ENCODE measurements at regions of chr1 and their contacts with region 1.

Region 1: DNA sequence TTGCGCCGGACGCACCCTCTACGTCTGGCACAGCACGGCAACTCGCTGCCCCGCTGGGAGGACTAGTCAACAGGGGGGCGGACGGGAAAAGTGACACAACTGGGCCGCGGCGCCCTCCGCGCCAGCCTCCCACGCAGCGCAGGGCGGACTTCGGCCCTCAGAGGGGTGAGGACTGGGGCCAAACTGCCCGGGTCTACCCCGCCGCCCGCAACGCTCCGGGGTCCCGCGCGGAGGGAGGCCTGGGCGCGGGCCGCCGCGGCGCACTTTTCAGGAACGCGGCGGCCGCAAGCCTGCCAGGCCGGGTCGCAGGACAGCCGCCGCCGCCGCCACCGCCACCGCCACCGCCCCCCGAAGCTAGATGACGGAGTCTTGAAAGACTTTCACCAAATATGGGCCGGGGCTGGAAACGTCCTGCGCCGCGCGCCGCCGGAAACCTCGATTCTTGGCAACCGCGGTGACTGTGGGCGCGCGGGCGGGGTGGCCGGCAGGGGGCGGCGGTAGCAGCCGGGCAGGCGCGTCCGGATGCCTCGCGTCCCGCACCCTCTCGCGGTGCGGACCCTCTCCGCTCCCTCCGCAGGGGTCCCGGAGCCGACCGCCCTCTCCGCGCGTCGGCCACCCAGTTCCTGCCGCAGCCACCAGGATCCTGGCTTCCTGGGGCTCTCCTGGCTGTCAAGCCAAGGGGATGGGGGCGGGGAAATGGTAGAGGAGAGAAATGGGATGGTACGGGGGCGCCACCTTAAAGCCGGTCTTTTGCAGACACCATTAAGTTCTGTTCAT is 3.7 kb upstream of the CCN1 start:
- DNase-seq: peak; percentile 37
- ATAC-seq: peak; percentile 66
- H3K4me3 ChIP-seq: peak overlapping the region; percentile 63 to 90 (median 78)
- H3K27ac ChIP-seq: no peak overlapping the region
- H3K4me1 ChIP-seq: peaks cover 55% of the 10 kb centered on the region
- H3K27me3 ChIP-seq: peaks cover 0 to 25% of the 10 kb centered on the region in 2 experiments; a peak in 4 of 5 replicates
- CTCF ChIP-seq: peak; percentile 69
- EP300 ChIP-seq: no peak
- POLR2A ChIP-seq: 0 out of 4 replicates have a peak, but pooled peaks of 1 of the 2 experiments have one; percentile 15
- RAD21 ChIP-seq: peak; percentile 68

Region 2: GRCh38 chr1:85464497-85465098 is 112.2 kb before region 1 on chr1:
- CTCF ChIA-PET with region 1: no interaction called
- POLR2A ChIA-PET with region 1: interaction called, 3 read pairs
- in situ Hi-C with region 1: no loop called
- intact Hi-C with region 1: loop called (anchors 2 kb)
- DNase-seq: peak; percentile 40
- ATAC-seq: peak; percentile 74
- H3K4me3 ChIP-seq: peak overlapping the region; percentile 89 to 93 (median 93)
- H3K27ac ChIP-seq: peak overlapping the region; percentile 83
- H3K4me1 ChIP-seq: peaks cover 49% of the 10 kb centered on the region
- H3K27me3 ChIP-seq: no peaks in the 10 kb centered on the region; a peak in 2 of 5 replicates
- CTCF ChIP-seq: no peak
- EP300 ChIP-seq: no peak
- POLR2A ChIP-seq: peak; percentile 61 to 78; a peak in 3 of 4 replicates
- RAD21 ChIP-seq: no peak

Region 3: DNA sequence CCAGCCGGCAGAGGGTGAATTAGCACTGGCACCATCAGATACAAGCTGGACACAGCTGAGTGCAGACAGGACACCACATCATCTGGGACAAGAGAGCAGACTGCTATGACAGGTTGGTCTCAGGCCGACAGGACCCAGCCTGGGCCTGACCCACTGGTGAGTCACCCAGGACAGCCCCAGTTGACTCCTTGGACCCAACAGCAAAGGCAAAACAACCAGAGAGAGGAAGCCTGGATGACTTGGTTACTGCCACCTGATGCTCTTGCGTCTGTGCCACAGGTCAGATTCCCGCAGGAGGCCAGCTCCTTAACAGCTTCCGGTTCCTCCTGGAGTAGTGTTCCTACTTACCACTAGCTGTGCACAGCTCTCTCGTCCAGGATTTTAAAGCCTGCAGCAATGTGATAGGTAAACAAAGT is 22.3 kb after region 1 on chr1:
- CTCF ChIA-PET with region 1: no interaction called
- POLR2A ChIA-PET with region 1: no interaction called
- in situ Hi-C with region 1: no loop called
- intact Hi-C with region 1: no loop called
- DNase-seq: no peak
- ATAC-seq: peak; percentile 59
- H3K4me3 ChIP-seq: no peak overlapping the region
- H3K27ac ChIP-seq: no peak overlapping the region
- H3K4me1 ChIP-seq: peaks cover 14% of the 10 kb centered on the region
- H3K27me3 ChIP-seq: no peaks in the 10 kb centered on the region
- CTCF ChIP-seq: no peak
- EP300 ChIP-seq: no peak
- POLR2A ChIP-seq: no peak
- RAD21 ChIP-seq: no peak

Region 4: DNA sequence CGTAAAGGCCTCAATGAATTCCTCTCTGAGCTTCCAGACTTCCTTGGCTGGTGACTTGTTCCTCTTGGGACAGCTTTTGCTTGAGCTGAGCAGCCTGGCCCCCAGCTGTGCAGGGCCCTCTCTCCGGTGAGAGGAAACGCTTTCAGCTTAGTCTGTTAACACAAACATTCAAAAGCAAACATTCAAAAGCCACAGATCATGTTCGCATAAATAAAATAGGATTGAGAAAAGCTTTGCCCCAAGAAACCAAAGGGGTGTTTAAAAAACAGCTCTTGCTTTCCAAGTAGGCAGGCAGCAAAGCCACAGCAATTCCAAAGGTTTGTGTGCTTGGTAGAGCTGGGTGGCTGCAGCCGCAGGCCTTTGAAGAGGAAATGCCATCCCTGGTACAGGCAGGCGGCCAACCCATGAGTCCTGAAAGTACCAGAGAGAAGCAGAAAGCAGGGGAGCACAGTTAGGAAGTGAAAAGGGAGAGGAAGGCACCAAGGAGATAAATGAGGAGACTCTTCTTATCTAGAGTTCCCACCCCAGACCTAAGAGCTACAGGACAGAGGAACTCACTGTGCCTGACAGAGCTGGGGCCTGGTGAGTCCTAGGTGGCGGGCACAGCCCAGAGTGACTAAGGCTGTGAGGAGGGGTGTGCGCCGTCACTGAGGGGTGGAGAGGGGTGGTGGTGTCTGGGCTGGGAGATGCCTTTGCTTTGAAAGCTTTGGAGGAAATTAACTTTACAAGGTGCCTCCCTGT is 52.1 kb after region 1 on chr1:
- CTCF ChIA-PET with region 1: no interaction called
- POLR2A ChIA-PET with region 1: interaction called, 29 read pairs
- in situ Hi-C with region 1: no loop called
- intact Hi-C with region 1: loop called (anchors 1 kb)
- DNase-seq: peak; percentile 82
- ATAC-seq: peak; percentile 96
- H3K4me3 ChIP-seq: peak overlapping the region; percentile 48 to 62 (median 56)
- H3K27ac ChIP-seq: peak overlapping the region; percentile 91
- H3K4me1 ChIP-seq: peaks cover 41% of the 10 kb centered on the region
- H3K27me3 ChIP-seq: no peaks in the 10 kb centered on the region
- CTCF ChIP-seq: no peak
- EP300 ChIP-seq: 0 out of 4 replicates have a peak, but pooled peaks of 1 of the 2 experiments have one; percentile 10
- POLR2A ChIP-seq: peak; percentile 15 to 50; a peak in 2 of 4 replicates
- RAD21 ChIP-seq: no peak

Region 5: GRCh38 chr1:85681087-85681486 is 104.3 kb after region 1 on chr1:
- CTCF ChIA-PET with region 1: no interaction called
- POLR2A ChIA-PET with region 1: interaction called, 3 read pairs
- in situ Hi-C with region 1: loop called (anchors 10 kb)
- intact Hi-C with region 1: loop called (anchors 2 kb)
- DNase-seq: peak; percentile 97
- ATAC-seq: peak; percentile 100
- H3K4me3 ChIP-seq: peak overlapping the region in 2 of 3 experiments; percentile 23 to 30; a peak in 1 of 6 replicates
- H3K27ac ChIP-seq: peak overlapping the region; percentile 98
- H3K4me1 ChIP-seq: peaks cover 33% of the 10 kb centered on the region
- H3K27me3 ChIP-seq: no peaks in the 10 kb centered on the region
- CTCF ChIP-seq: no peak
- EP300 ChIP-seq: peak; percentile 89 to 99
- POLR2A ChIP-seq: no peak
- RAD21 ChIP-seq: no peak

Region 6: DNA sequence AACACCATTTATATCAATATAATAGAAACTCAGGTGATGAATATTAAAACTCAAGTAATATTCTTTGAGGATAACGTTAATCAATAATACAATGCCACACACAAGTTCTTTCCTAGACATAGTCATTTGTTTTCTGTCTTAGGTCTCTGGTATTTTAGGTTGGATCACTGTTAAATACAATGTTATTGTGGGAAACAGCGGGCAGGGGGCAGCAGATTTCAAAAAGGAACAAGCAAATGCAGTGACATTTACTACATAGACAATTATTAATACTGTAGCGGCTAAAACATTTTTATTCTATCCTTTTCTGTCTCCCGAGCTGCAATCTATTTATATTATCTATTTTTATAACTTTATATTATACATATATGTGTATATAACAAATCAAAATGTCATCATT is 317.8 kb after region 1 on chr1:
- CTCF ChIA-PET with region 1: no interaction called
- POLR2A ChIA-PET with region 1: no interaction called
- in situ Hi-C with region 1: no loop called
- intact Hi-C with region 1: loop called (anchors 1 kb)
- DNase-seq: peak; percentile 25
- ATAC-seq: peak; percentile 63; the same call in 2 of the 3 replicates
- H3K4me3 ChIP-seq: no peak overlapping the region
- H3K27ac ChIP-seq: no peak overlapping the region
- H3K4me1 ChIP-seq: no peaks in the 10 kb centered on the region
- H3K27me3 ChIP-seq: no peaks in the 10 kb centered on the region
- CTCF ChIP-seq: peak; percentile 44
- EP300 ChIP-seq: no peak
- POLR2A ChIP-seq: no peak
- RAD21 ChIP-seq: no peak